HEK293 (cell line): ENCODE measurements at regions of chr11 and their contacts with region 1.

Region 1: DNA sequence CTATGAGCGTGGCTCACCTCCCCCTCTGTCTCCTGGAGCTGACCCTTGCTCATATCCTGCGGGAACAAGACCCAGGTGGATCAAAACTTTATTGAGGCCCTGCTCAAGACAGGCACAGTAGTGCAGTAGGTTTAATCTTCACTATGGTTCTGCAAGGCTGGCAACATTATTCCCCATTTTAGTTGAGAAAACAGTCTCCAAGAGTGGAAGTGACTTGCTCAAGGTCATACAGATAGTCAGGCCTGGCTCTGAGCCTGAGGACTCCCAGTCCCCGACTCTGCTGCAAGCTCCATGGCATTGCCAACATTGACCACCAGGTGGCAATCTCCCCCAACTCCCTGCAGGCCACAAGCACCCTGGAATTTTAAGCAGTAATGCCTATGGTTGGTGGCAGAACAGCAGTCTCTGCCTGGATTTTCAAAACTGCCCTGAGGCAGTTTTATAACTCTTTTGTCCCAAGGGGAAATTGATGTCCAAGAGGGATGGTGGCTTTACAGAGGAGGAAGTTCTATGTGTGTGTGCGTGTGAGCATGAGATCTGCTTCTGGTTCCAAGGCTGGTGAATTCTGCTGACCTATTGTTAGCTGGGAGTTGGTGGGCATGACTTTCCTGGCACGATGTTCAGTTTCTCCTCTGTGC is 34.1 kb downstream of the NEU3 start:
- H3K4me3 ChIP-seq: no peak overlapping the region
- H3K27ac ChIP-seq: no peak overlapping the region
- H3K4me1 ChIP-seq: no peaks in the 10 kb centered on the region
- CTCF ChIP-seq: peak; percentile 67; the same call in 1 of the 2 replicates

Region 2: DNA sequence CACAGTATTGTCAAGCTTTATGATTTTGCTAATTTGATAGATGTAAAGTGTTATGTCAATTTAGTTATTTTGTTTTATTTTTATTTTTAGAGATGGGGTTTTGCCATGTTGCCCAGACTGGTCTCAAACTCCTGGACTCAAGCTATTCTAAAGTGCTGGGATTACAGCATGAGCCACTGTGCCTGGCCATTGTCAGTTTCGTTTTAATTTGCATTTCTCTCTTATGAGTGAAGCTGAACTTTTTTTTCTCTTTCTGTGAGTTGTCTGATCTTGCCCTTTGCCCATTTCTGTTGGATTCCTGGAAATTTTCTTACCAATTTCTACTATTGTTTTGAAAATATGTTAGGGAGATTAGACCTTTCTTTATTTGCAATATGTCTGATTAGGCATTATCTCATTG is 18.7 kb before region 1 on chr11:
- CTCF ChIA-PET with region 1: interaction called, 17 read pairs
- POLR2A ChIA-PET with region 1: no interaction called
- H3K4me3 ChIP-seq: no peak overlapping the region
- H3K27ac ChIP-seq: no peak overlapping the region
- H3K4me1 ChIP-seq: no peaks in the 10 kb centered on the region
- CTCF ChIP-seq: no peak

Region 3: GRCh38 chr11:75011357-75011756 is 11.5 kb before region 1 on chr11:
- CTCF ChIA-PET with region 1: interaction called, 12 read pairs
- POLR2A ChIA-PET with region 1: no interaction called
- H3K4me3 ChIP-seq: no peak overlapping the region
- H3K27ac ChIP-seq: no peak overlapping the region
- H3K4me1 ChIP-seq: no peaks in the 10 kb centered on the region
- CTCF ChIP-seq: no peak

Region 4: DNA sequence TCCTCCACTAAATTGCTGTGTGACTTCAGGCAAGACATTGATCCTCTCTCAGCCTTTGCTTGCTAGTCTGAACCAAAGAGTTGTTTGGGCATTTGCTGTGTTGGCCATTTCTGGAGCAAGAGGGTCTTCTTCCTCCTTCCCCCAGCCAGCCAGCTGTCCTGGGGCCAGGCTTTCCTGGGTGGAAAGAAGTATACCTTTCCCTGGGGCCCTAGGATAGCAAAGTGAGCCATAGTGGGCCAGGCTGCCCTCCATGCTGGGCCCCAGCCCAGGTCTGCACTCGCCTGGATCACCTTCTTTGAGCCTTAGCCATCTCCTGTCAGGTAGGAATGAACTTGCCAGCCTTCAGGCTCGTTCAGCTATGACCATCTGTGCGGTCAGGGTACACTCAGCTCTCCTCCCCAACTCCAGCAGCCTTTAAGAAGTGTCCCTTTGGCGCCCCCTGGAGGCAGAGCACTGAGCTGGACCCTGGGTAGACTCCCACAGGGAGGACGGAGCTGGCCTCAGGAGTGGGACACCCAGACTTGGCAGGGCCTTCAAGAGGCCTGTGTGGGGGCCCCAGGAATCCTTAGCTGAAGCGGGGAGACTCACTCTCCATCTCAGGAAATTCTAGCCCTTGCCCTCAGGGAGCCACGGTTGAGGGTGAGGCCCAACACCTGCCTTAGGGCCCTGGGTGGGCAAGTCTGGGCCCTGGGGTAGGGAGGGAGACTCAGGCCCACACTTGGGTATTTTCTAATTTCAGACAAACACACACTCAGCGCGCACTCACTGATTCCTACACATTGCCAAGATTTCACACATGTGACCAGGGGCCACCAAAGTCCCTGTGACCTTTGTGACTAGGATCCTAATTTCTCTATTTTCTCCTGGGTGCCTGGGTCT is 182.0 kb after region 1 on chr11:
- CTCF ChIA-PET with region 1: interaction called, 50 read pairs
- POLR2A ChIA-PET with region 1: no interaction called
- H3K4me3 ChIP-seq: no peak overlapping the region
- H3K27ac ChIP-seq: no peak overlapping the region
- H3K4me1 ChIP-seq: no peaks in the 10 kb centered on the region
- CTCF ChIP-seq: no peak

Region 5: GRCh38 chr11:75760710-75761493 is 738.0 kb after region 1 on chr11:
- CTCF ChIA-PET with region 1: no interaction called
- POLR2A ChIA-PET with region 1: no interaction called
- H3K4me3 ChIP-seq: no peak overlapping the region
- H3K27ac ChIP-seq: no peak overlapping the region
- H3K4me1 ChIP-seq: no peaks in the 10 kb centered on the region
- CTCF ChIP-seq: no peak